HCT116 (cell line): ENCODE measurements at regions of chr10 and their contacts with region 1.

Region 1: GRCh38 chr10:110354322-110354766 is 49.6 kb upstream of the SMNDC1 start:
- DNase-seq: peak; percentile 85
- ATAC-seq: peak; percentile 76
- H3K4me3 ChIP-seq: peak overlapping the region; percentile 27 to 36
- H3K27ac ChIP-seq: 0 out of 2 replicates have a peak overlapping the region, but pooled peaks have one; percentile 6
- H3K4me1 ChIP-seq: peaks cover 58 to 68% of the 10 kb centered on the region in 2 experiments
- H3K27me3 ChIP-seq: no peaks in the 10 kb centered on the region
- CTCF ChIP-seq: peak in 2 of 3 experiments; percentile 97; a peak in 4 of 6 replicates
- POLR2A ChIP-seq: no peak
- RAD21 ChIP-seq: no peak

Region 2: GRCh38 chr10:110311357-110311949 is 42.9 kb before region 1 on chr10:
- CTCF ChIA-PET with region 1: interaction called, 4 read pairs
- POLR2A ChIA-PET with region 1: no interaction called
- RAD21 ChIA-PET with region 1: interaction called in 1 of 2 experiments, 3 read pairs
- intact Hi-C with region 1: loop called (anchors 5 kb)
- DNase-seq: peak; percentile 80
- ATAC-seq: peak; percentile 90
- H3K4me3 ChIP-seq: no peak overlapping the region
- H3K27ac ChIP-seq: no peak overlapping the region
- H3K4me1 ChIP-seq: peaks cover 2 to 20% of the 10 kb centered on the region in 2 experiments; a peak in 2 of 4 replicates
- H3K27me3 ChIP-seq: no peaks in the 10 kb centered on the region
- CTCF ChIP-seq: peak; percentile 73 to 96 (median 90)
- POLR2A ChIP-seq: no peak
- RAD21 ChIP-seq: peak; percentile 99

Region 3: GRCh38 chr10:110395725-110396651 is 41.6 kb after region 1 on chr10:
- CTCF ChIA-PET with region 1: interaction called, 31 read pairs
- POLR2A ChIA-PET with region 1: interaction called, 7 read pairs
- RAD21 ChIA-PET with region 1: interaction called, 3 to 7 read pairs
- intact Hi-C with region 1: loop called (anchors 2 kb)
- DNase-seq: peak; percentile 96
- ATAC-seq: peak; percentile 58
- H3K4me3 ChIP-seq: peak overlapping the region in 1 of 2 experiments; percentile 19; a peak in 2 of 4 replicates
- H3K27ac ChIP-seq: peak overlapping the region; percentile 71
- H3K4me1 ChIP-seq: peaks cover 69 to 85% of the 10 kb centered on the region in 2 experiments
- H3K27me3 ChIP-seq: no peaks in the 10 kb centered on the region
- CTCF ChIP-seq: no peak
- POLR2A ChIP-seq: no peak
- RAD21 ChIP-seq: no peak

Region 4: DNA sequence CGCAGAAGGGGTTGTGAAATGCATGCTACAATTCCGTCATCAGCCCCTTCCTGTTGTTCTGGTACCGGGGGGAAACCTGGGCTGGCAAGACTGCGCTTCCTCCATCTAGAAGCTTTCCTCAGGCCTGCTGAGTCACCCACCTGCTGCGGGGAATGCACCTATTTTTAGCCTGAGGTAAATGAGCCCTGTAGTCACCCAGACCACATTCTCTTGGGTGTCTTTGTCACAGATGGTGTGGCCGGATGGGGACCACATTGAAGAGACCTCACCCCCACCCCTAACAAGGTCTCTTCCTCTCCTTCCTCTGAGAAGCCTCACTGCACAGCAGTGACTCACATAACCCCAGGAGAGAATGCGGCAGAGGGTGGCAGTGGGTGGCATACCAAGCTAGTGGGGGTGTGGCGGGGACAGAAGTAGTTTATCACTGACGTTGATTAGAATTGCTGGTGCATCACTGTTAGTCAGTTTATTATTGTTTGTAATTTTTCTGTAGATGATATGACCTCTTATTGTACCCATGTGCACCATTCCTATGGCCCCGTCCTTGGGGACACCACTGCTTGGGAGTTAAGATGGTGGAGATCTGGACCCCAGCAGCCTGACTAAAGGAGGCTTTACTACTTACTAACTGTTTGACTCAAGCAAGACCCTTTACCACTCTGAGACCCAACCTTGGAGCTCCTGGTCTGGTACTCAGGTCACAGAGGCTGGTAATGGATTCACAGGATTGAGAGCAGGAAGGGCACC is 60.4 kb after region 1 on chr10:
- CTCF ChIA-PET with region 1: interaction called, 14 read pairs
- POLR2A ChIA-PET with region 1: interaction called, 7 read pairs
- RAD21 ChIA-PET with region 1: interaction called in 1 of 2 experiments, 3 read pairs
- intact Hi-C with region 1: loop called (anchors 5 kb)
- DNase-seq: peak; percentile 98
- ATAC-seq: peak; percentile 70
- H3K4me3 ChIP-seq: peak overlapping the region in 1 of 2 experiments; percentile 32; a peak in 2 of 4 replicates
- H3K27ac ChIP-seq: peak overlapping the region; percentile 95
- H3K4me1 ChIP-seq: peaks cover 84 to 92% of the 10 kb centered on the region in 2 experiments
- H3K27me3 ChIP-seq: no peaks in the 10 kb centered on the region
- CTCF ChIP-seq: no peak
- POLR2A ChIP-seq: peak; percentile 18
- RAD21 ChIP-seq: no peak

Region 5: GRCh38 chr10:110512461-110513187 is 158.3 kb after region 1 on chr10:
- CTCF ChIA-PET with region 1: interaction called, 26 read pairs
- POLR2A ChIA-PET with region 1: interaction called, 6 read pairs
- RAD21 ChIA-PET with region 1: interaction called in 1 of 2 experiments, 3 read pairs
- intact Hi-C with region 1: no loop called
- DNase-seq: no peak
- ATAC-seq: peak; percentile 67
- H3K4me3 ChIP-seq: no peak overlapping the region
- H3K27ac ChIP-seq: peak overlapping the region; percentile 33
- H3K4me1 ChIP-seq: peaks cover 8 to 55% of the 10 kb centered on the region in 2 experiments; a peak in 3 of 4 replicates
- H3K27me3 ChIP-seq: no peaks in the 10 kb centered on the region
- CTCF ChIP-seq: no peak
- POLR2A ChIP-seq: no peak
- RAD21 ChIP-seq: 0 out of 2 replicates have a peak, but pooled peaks have one; percentile 17